ENCODE measurements at regions of chr13 and their contacts with region 1.

Region 1: GRCh38 chr13:102800145-102801041 is 1.5 kb downstream of the BIVM start:
- DNase-seq: peak; percentile 83
- H3K4me3 Mint-ChIP-seq: peak overlapping the region; percentile 97
- H3K27ac Mint-ChIP-seq: peak overlapping the region; percentile 91
- H3K4me1 Mint-ChIP-seq: peaks cover 43% of the 10 kb centered on the region
- H3K27me3 Mint-ChIP-seq: no peaks in the 10 kb centered on the region

Region 2: GRCh38 chr13:102596147-102597028 is 204.0 kb before region 1 on chr13 and contains the start of gene TPP2:
- intact Hi-C with region 1: loop called (anchors 1 kb)
- DNase-seq: peak; percentile 98
- H3K4me3 Mint-ChIP-seq: peak within 1 kb of the TSS; percentile 95
- H3K27ac Mint-ChIP-seq: peak within 1 kb of the TSS; percentile 97
- H3K4me1 Mint-ChIP-seq: peaks cover 72% of the 10 kb centered on the region
- H3K27me3 Mint-ChIP-seq: no peaks in the 10 kb centered on the region
- total RNA-seq, gene TPP2: 77.0 and 78.9 TPM in 2 replicates

Region 3: DNA sequence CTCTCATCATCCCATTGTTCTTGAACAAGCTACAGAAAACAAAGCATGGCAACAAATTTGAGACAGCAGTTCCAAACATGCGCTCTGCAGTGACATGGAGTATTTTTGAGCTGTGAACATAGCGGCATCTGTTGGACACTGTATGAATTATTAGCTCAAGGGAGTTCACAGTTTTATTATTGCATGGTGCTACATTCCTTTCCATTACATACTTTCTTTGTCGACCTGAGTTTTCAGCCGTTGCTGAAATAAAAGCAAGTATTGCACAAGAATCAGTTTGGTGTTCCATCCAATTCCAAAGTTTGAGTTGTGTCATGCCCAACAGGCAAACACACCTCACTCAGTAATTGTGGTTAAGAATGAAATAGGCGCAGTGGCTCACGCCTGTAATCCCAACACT is 75.5 kb before region 1 on chr13:
- intact Hi-C with region 1: loop called (anchors 1 kb)
- DNase-seq: no peak
- H3K4me3 Mint-ChIP-seq: no peak overlapping the region
- H3K27ac Mint-ChIP-seq: no peak overlapping the region
- H3K4me1 Mint-ChIP-seq: peaks cover 13% of the 10 kb centered on the region
- H3K27me3 Mint-ChIP-seq: peaks cover 20% of the 10 kb centered on the region

Region 4: GRCh38 chr13:102773441-102774215 is 26.8 kb before region 1 on chr13 and contains the start of gene TEX30:
- intact Hi-C with region 1: loop called (anchors 1 kb)
- DNase-seq: peak; percentile 89
- H3K4me3 Mint-ChIP-seq: peak within 1 kb of the TSS; percentile 95
- H3K27ac Mint-ChIP-seq: peak within 1 kb of the TSS; percentile 95
- H3K4me1 Mint-ChIP-seq: peaks cover 66% of the 10 kb centered on the region
- H3K27me3 Mint-ChIP-seq: no peaks in the 10 kb centered on the region
- total RNA-seq, gene TEX30: 60.2 and 66.0 TPM in 2 replicates

Region 5: GRCh38 chr13:102814025-102814607 is 13.7 kb after region 1 on chr13:
- intact Hi-C with region 1: loop called (anchors 2 kb)
- DNase-seq: no peak
- H3K4me3 Mint-ChIP-seq: no peak overlapping the region
- H3K27ac Mint-ChIP-seq: no peak overlapping the region
- H3K4me1 Mint-ChIP-seq: peaks cover 23% of the 10 kb centered on the region
- H3K27me3 Mint-ChIP-seq: no peaks in the 10 kb centered on the region

Region 6: GRCh38 chr13:103517066-103517767 is 716.8 kb after region 1 on chr13:
- intact Hi-C with region 1: no loop called
- DNase-seq: no peak
- H3K4me3 Mint-ChIP-seq: no peak overlapping the region
- H3K27ac Mint-ChIP-seq: no peak overlapping the region
- H3K4me1 Mint-ChIP-seq: no peaks in the 10 kb centered on the region
- H3K27me3 Mint-ChIP-seq: no peaks in the 10 kb centered on the region